ENCODE measurements at regions of chr2 and their contacts with region 1.

Region 1: GRCh38 chr2:199985625-199986207 is 30.3 kb downstream of the MAIP1 start:
- DNase-seq: peak in 4 of 5 donors; percentile 47 to 67 (median 54)
- ATAC-seq: peak; percentile 36 to 76 (median 60)
- H3K4me3 ChIP-seq: no peak overlapping the region
- H3K27ac ChIP-seq: no peak overlapping the region
- H3K4me1 ChIP-seq: peaks cover 0 to 26% (median 10%) of the 10 kb centered on the region in 12 donors
- H3K27me3 ChIP-seq: no peaks in the 10 kb centered on the region
- CTCF ChIP-seq: peak; percentile 44 to 71 (median 52)
- POLR2A ChIP-seq: no peak

Region 2: GRCh38 chr2:199914372-199914958 is 71.3 kb before region 1 on chr2:
- intact Hi-C with region 1: no loop called
- DNase-seq: no peak
- ATAC-seq: no peak
- H3K4me3 ChIP-seq: no peak overlapping the region
- H3K27ac ChIP-seq: no peak overlapping the region
- H3K4me1 ChIP-seq: peaks cover 0 to 29% (median 22%) of the 10 kb centered on the region in 12 donors
- H3K27me3 ChIP-seq: no peaks in the 10 kb centered on the region
- CTCF ChIP-seq: no peak
- POLR2A ChIP-seq: no peak

Region 3: GRCh38 chr2:200156166-200156835 is 170.6 kb after region 1 on chr2:
- intact Hi-C with region 1: loop called in 1 of 10 experiments (anchors 10 kb)
- DNase-seq: peak in 2 of 5 donors; percentile 37 to 42
- ATAC-seq: peak; percentile 61 to 86 (median 69)
- H3K4me3 ChIP-seq: peak overlapping the region in 9 of 12 donors; percentile 21 to 55 (median 33)
- H3K27ac ChIP-seq: peak overlapping the region in 2 of 12 donors; percentile 21 to 26
- H3K4me1 ChIP-seq: peaks cover 0 to 8% (median 0%) of the 10 kb centered on the region in 12 donors
- H3K27me3 ChIP-seq: no peaks in the 10 kb centered on the region
- CTCF ChIP-seq: no peak
- POLR2A ChIP-seq: no peak

Region 4: GRCh38 chr2:200300648-200301314 is 315.1 kb after region 1 on chr2:
- intact Hi-C with region 1: loop called in 7 of 10 experiments (anchors 5 to 10 kb)
- DNase-seq: peak in 2 of 5 donors; percentile 36 to 45
- ATAC-seq: peak; percentile 69 to 88 (median 74)
- H3K4me3 ChIP-seq: no peak overlapping the region
- H3K27ac ChIP-seq: no peak overlapping the region
- H3K4me1 ChIP-seq: peaks cover 0 to 22% (median 5%) of the 10 kb centered on the region in 12 donors
- H3K27me3 ChIP-seq: no peaks in the 10 kb centered on the region
- CTCF ChIP-seq: no peak
- POLR2A ChIP-seq: no peak